H1 (cell line): ENCODE measurements at regions of chr12 and their contacts with region 1.

Region 1: DNA sequence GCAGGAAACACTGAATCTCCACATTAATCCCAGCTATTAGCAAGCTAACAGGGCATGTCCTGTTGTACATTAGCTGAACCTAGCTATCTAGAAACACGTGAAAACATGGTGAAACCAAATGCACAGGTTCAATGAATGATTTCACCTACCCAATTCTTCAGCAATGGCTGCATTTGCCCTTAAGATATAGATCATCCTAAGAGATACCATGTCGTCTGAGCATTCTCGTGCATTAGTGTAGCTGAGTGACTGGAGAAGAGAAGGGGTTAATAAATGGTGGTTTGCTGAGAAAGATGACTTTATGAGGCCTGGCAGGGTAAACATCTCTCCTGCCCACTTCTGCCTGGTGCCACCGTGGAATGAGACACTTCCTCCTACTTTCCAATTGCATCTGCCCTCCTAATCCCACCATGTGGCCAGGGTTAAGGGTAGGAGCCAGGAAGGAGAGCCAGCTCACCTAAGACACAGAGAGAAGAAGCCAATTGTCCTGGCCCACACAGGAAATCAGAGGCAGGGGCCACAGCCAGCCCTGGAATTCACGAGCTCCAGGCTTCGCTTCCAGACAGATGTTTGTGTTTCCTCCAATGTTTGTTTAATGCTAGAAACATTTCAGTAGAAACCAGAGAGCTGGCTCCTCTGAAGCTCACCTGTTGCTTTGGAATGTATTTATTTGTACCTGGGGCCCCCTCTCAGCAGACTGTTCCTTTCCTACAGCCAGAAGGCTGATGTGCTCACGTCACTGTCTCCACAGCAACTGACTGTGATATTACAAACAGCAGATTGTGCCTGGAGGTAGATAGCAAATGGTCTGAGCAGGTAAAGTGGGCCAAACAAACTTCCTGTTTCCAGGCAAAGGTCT is 126.0 kb upstream of the PARP11 start:
- DNase-seq: no peak
- H3K4me3 ChIP-seq: no peak overlapping the region
- H3K27ac ChIP-seq: no peak overlapping the region
- H3K4me1 ChIP-seq: 0 out of 7 replicates have a peak, but pooled peaks cover 0 to 2% (median 0%) of the 10 kb centered on the region in 4 experiments
- H3K27me3 ChIP-seq: peaks cover 0 to 3% (median under 1%) of the 10 kb centered on the region in 4 experiments; a peak in 1 of 7 replicates
- CTCF ChIP-seq: no peak
- EP300 ChIP-seq: no peak
- POLR2A ChIP-seq: no peak
- RAD21 ChIP-seq: no peak

Region 2: DNA sequence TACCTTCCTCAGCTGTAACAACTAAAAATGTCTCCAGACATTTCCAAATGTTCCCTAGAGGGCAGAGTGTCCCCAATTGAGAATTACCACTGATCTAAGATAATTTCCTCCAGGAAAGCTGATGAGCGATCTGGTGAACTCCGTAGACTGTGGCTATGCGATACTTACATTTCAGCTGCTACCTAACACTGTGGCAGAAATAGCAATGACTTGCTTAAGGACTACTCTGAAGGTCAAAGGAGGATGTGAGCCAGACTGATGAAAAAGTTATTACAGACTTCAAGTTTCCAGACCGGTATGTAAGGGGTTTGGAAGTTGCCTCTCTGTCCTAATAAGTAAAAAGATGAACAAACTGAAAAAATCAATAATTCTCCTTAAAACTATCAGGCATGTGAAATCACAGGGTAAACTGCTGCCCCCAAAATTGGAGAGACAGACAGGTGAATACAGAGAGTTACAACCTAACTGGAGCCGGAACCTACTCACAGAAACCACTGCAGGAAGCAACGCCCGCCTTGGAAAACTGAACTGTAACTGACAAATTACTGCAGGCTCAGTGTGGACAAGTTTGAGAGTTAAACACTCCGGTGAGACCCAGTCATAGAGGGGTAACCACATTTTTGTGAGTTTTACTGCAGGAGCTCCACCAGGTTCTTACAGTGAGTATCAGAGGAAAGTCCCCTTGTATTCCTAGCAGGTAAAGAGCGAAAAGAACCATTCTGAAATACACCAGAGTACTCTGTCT is 66.0 kb before region 1 on chr12:
- CTCF ChIA-PET with region 1: no interaction called
- POLR2A ChIA-PET with region 1: no interaction called
- DNase-seq: no peak
- H3K4me3 ChIP-seq: no peak overlapping the region
- H3K27ac ChIP-seq: no peak overlapping the region
- H3K4me1 ChIP-seq: peaks cover 0 to 6% (median 2%) of the 10 kb centered on the region in 4 experiments; a peak in 2 of 7 replicates
- H3K27me3 ChIP-seq: no peaks in the 10 kb centered on the region
- CTCF ChIP-seq: no peak
- EP300 ChIP-seq: no peak
- POLR2A ChIP-seq: no peak
- RAD21 ChIP-seq: peak in 1 of 2 experiments; percentile 10; a peak in 1 of 4 replicates

Region 3: GRCh38 chr12:4030929-4031702 is 31.9 kb after region 1 on chr12:
- CTCF ChIA-PET with region 1: interaction called, 273 read pairs
- POLR2A ChIA-PET with region 1: interaction called, 5 read pairs
- DNase-seq: peak; percentile 85 to 91
- H3K4me3 ChIP-seq: peak overlapping the region in 1 of 4 experiments; percentile 42; a peak in 4 of 8 replicates
- H3K27ac ChIP-seq: peak overlapping the region; percentile 29; the same call in 1 of the 2 replicates
- H3K4me1 ChIP-seq: peaks cover 14 to 33% (median 23%) of the 10 kb centered on the region in 4 experiments
- H3K27me3 ChIP-seq: peaks cover 2 to 15% (median 6%) of the 10 kb centered on the region in 4 experiments
- CTCF ChIP-seq: no peak
- EP300 ChIP-seq: no peak
- POLR2A ChIP-seq: peak in 1 of 2 experiments; percentile 53; a peak in 1 of 3 replicates
- RAD21 ChIP-seq: peak in 1 of 2 experiments; percentile 4; a peak in 1 of 4 replicates

Region 4: DNA sequence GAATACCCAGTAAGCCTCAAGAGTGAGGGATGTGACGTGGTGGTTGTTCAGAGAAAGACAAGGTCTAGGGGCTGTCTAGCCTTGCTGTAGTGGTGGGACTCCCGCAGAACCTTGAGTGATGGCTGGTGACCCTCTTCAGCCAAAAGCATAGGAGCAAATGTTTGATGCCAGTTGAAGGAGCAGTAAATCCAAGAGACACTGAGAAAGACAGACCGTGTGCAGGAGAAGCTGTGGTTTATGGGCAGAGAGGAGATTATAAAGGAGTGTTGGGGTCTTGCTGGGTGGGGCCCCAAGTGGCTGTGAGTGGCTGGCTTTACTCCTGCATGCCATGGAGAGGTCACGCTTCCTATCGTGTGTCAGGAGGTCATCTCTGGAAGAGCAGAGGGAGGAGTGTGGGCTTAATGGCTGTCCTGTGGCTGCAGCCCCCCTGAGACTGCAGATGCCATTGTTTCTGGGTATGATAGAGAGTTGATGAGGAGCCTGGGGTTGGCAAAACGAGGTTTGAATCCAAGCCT is 122.4 kb after region 1 on chr12:
- CTCF ChIA-PET with region 1: no interaction called
- POLR2A ChIA-PET with region 1: no interaction called
- DNase-seq: peak in 1 of 2 experiments; percentile 19
- H3K4me3 ChIP-seq: no peak overlapping the region
- H3K27ac ChIP-seq: no peak overlapping the region
- H3K4me1 ChIP-seq: peaks cover 0 to 4% (median 2%) of the 10 kb centered on the region in 4 experiments; a peak in 5 of 7 replicates
- H3K27me3 ChIP-seq: no peaks in the 10 kb centered on the region
- CTCF ChIP-seq: no peak
- EP300 ChIP-seq: no peak
- POLR2A ChIP-seq: no peak
- RAD21 ChIP-seq: no peak